ENCODE measurements at regions of chr1 and their contacts with region 1.

Region 1: DNA sequence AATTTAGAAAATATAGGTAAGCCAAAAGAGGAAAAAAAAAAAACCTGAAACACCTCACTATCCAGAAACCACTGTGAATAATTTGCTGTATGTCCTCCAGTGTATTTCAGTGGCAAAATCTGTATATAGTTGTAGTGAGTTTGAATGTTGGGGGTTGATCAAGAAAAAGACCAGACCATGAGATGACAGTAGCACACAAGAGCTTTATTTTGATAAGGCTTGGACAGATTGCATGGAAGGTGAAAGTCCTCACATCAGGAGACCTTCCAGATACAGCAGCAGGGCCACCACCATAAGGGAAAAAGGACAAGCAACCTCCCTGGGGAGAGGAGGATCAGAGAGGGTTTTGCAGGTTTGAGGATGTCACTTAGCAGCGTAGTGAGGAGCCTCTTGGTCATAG is 16.2 kb upstream of the C1orf115 start:
- DNase-seq: no peak
- H3K4me3 ChIP-seq: no peak overlapping the region
- CTCF ChIP-seq: no peak
- POLR2A ChIP-seq: no peak

Region 2: GRCh38 chr1:220717800-220718640 is 44.1 kb after region 1 on chr1:
- intact Hi-C with region 1: no loop called
- DNase-seq: no peak
- H3K4me3 ChIP-seq: no peak overlapping the region
- CTCF ChIP-seq: no peak
- POLR2A ChIP-seq: no peak

Region 3: DNA sequence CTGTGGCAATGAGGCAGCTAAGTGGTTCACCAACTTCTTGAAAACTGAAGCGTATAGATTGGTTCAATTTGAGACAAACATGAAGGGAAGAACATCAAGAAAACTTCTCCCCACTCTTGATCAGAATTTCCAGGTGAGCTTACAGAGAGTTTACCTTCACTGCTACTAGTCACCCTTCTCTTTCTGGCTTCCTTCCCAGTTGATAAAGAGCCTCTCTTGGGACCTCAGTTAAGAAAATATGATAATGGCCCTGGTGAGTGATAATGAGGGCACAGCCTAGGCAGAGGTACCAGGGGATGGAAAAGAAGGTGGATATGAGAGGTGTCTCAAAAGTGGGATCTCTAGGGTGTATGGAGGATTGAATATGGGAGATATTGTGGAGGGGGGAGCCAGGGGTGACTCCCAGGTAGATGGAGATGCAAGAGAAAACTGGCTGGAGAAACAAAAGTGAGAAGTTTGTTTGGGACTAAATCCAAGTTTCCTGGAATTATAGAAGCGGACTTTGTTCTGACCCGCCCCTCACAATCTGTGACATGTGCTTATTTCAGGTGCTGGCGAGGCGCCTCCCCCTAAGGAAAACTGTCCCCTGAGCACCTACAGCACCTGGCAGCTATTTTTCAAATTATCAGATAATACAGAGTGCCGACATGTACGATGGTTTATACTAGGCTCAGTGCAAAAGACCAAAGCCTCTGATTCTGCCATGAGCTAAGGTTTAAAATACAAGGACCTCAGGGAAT is 87.9 kb after region 1 on chr1:
- intact Hi-C with region 1: no loop called
- DNase-seq: no peak
- H3K4me3 ChIP-seq: no peak overlapping the region
- CTCF ChIP-seq: no peak
- POLR2A ChIP-seq: no peak

Region 4: GRCh38 chr1:222347627-222348026 is 1673.7 kb after region 1 on chr1:
- intact Hi-C with region 1: no loop called
- DNase-seq: no peak
- H3K4me3 ChIP-seq: no peak overlapping the region
- CTCF ChIP-seq: no peak
- POLR2A ChIP-seq: no peak

Region 5: GRCh38 chr1:222420633-222421032 is 1746.7 kb after region 1 on chr1:
- intact Hi-C with region 1: loop called (anchors 10 kb)
- DNase-seq: no peak
- H3K4me3 ChIP-seq: no peak overlapping the region
- CTCF ChIP-seq: no peak
- POLR2A ChIP-seq: no peak

Region 6: GRCh38 chr1:222438661-222439060 is 1764.7 kb after region 1 on chr1:
- intact Hi-C with region 1: no loop called
- DNase-seq: no peak
- H3K4me3 ChIP-seq: no peak overlapping the region
- CTCF ChIP-seq: no peak
- POLR2A ChIP-seq: no peak